Activated CD4-positive, alpha-beta memory T cell treated with anti-CD3 and anti-CD28 coated beads for 36 hours (primary cell): ENCODE measurements at regions of chr4 and their contacts with region 1.

Region 1: GRCh38 chr4:121696581-121697461 is at the start of gene ANXA5:
- DNase-seq: peak; percentile 86
- H3K4me3 Mint-ChIP-seq: peak within 1 kb of the TSS; percentile 99
- H3K27ac Mint-ChIP-seq: peak within 1 kb of the TSS; percentile 99
- H3K4me1 Mint-ChIP-seq: peaks cover 37% of the 10 kb centered on the region
- H3K27me3 Mint-ChIP-seq: peaks cover 10% of the 10 kb centered on the region
- total RNA-seq, gene ANXA5: 132 to 140 TPM

Region 2: DNA sequence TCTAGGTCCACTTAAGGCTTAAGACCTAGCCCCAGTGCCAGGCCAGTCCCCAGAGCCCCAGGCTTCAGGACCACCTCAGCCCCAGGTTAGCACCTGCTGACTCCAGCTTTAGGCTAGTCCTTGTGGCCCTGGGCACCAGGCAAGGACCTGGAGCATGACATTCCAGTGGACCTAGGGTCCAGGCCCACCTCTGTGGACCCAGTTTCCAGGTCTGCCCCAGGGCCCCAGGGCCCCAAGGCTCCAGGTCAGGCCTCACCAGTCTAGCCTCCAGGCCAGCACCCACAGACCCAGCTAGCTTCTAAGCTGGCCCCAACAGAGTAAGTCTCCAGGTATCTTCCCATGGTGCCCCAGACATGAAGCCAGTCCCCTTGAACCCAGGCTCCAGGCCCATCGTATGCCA is 413.5 kb before region 1 on chr4:
- CTCF ChIA-PET with region 1: no interaction called
- POLR2A ChIA-PET with region 1: no interaction called
- intact Hi-C with region 1: no loop called
- DNase-seq: no peak
- H3K4me3 Mint-ChIP-seq: no peak overlapping the region
- H3K27ac Mint-ChIP-seq: no peak overlapping the region
- H3K4me1 Mint-ChIP-seq: peaks cover 22% of the 10 kb centered on the region
- H3K27me3 Mint-ChIP-seq: peaks cover 3% of the 10 kb centered on the region

Region 3: GRCh38 chr4:121749225-121749624 is 52.4 kb after region 1 on chr4:
- CTCF ChIA-PET with region 1: no interaction called
- POLR2A ChIA-PET with region 1: no interaction called
- intact Hi-C with region 1: no loop called
- DNase-seq: no peak
- H3K4me3 Mint-ChIP-seq: no peak overlapping the region
- H3K27ac Mint-ChIP-seq: no peak overlapping the region
- H3K4me1 Mint-ChIP-seq: no peaks in the 10 kb centered on the region
- H3K27me3 Mint-ChIP-seq: peaks cover 27% of the 10 kb centered on the region

Region 4: DNA sequence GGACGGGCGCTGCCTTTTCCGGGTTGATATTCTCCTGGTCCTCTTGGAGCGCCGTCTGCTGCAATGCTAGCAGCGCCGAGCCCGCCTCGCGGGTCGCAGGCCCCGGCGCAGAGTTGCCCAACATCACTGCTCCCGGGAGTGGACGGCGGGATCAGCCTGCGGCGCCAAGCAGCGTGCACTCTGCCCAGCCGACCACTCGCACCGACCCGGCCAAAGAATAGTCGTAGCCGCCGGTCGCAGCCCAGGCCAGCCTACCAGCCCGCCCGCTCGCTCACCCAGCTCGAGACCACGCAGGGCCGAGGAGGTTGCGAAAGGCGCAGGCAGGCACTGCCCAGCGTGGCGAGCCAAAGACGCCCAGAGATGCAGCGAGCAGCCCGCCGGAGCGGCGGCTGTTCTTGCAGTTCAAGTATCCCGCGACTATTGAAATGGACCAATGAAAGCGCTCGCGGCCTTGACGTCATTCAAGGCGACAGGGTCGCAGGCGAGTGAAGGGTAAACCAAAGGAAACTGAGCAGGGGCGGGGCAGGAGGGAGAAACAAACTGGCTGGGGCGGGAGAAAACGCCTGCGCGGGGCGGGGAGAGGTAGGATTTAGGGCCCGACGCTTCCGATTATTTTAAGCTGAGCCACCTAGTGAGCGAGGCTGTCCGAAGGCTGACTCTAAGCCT is 126.8 kb after region 1 on chr4 and contains the start of gene CCNA2:
- CTCF ChIA-PET with region 1: interaction called, 3 read pairs
- POLR2A ChIA-PET with region 1: no interaction called
- intact Hi-C with region 1: loop called (anchors 2 kb)
- DNase-seq: peak; percentile 99
- H3K4me3 Mint-ChIP-seq: peak within 1 kb of the TSS; percentile 97
- H3K27ac Mint-ChIP-seq: peak within 1 kb of the TSS; percentile 81
- H3K4me1 Mint-ChIP-seq: peaks cover 25% of the 10 kb centered on the region
- H3K27me3 Mint-ChIP-seq: no peaks in the 10 kb centered on the region
- total RNA-seq, gene CCNA2: 98.2 to 100 TPM